ENCODE measurements at regions of chr7 and their contacts with region 1.

Region 1: GRCh38 chr7:40329601-40330153 is 194.9 kb downstream of the SUGCT start:
- DNase-seq: peak in 5 of 9 donors; percentile 11 to 30 (median 26)
- ATAC-seq: no peak
- H3K4me3 ChIP-seq: no peak overlapping the region
- H3K4me3 Mint-ChIP-seq: no peak overlapping the region
- H3K27ac ChIP-seq: no peak overlapping the region
- H3K27ac Mint-ChIP-seq: no peak overlapping the region
- H3K4me1 ChIP-seq: no peaks in the 10 kb centered on the region
- H3K4me1 Mint-ChIP-seq: no peaks in the 10 kb centered on the region
- H3K27me3 ChIP-seq: no peaks in the 10 kb centered on the region
- H3K27me3 Mint-ChIP-seq: no peaks in the 10 kb centered on the region

Region 2: DNA sequence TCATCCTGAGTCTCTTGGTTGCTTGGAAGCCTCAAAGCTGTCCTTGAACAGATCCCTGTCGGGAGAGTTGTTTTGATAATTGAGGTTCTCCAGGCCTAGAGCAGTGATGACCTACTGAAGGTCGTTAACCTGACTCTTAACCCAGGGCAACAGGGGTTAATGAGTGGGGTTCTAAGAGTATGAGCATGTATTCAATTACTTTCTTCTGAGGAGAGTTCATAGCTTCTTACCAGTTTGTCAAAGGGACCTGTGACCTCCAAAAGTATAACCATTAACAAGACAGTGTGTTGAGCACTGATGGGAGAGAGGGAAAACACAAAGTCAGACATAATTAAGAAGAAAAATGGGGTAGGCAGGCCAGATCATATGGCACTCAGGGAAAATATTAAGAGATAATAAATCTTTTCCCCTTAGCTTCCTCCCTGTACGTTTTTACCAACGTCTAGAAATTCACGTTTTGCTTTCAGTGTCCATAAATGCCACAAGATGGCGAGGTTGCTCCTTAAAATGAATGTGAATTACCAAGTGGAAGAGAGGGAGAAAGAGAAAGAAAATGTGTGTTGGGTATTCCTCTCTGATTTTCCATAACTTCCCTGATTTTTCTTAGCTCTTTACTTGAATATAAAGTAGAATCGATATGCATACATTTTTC is 97.3 kb before region 1 on chr7:
- CTCF ChIA-PET with region 1: no interaction called
- POLR2A ChIA-PET with region 1: no interaction called
- intact Hi-C with region 1: loop called in 1 of 2 experiments (anchors 2 kb)
- DNase-seq: peak in 3 of 9 donors; percentile 3 to 12 (median 11)
- ATAC-seq: peak; percentile 40
- H3K4me3 ChIP-seq: no peak overlapping the region
- H3K4me3 Mint-ChIP-seq: no peak overlapping the region
- H3K27ac ChIP-seq: no peak overlapping the region
- H3K27ac Mint-ChIP-seq: peak overlapping the region in 1 of 9 donors; percentile 7
- H3K4me1 ChIP-seq: peaks cover 0 to 4% of the 10 kb centered on the region in 2 donors
- H3K4me1 Mint-ChIP-seq: peaks cover 0 to 19% (median 6%) of the 10 kb centered on the region in 7 donors
- H3K27me3 ChIP-seq: no peaks in the 10 kb centered on the region
- H3K27me3 Mint-ChIP-seq: no peaks in the 10 kb centered on the region

Region 3: GRCh38 chr7:40489844-40490602 is 160.3 kb after region 1 on chr7:
- CTCF ChIA-PET with region 1: no interaction called
- POLR2A ChIA-PET with region 1: no interaction called
- intact Hi-C with region 1: no loop called
- DNase-seq: no peak
- ATAC-seq: no peak
- H3K4me3 ChIP-seq: no peak overlapping the region
- H3K4me3 Mint-ChIP-seq: no peak overlapping the region
- H3K27ac ChIP-seq: no peak overlapping the region
- H3K27ac Mint-ChIP-seq: no peak overlapping the region
- H3K4me1 ChIP-seq: no peaks in the 10 kb centered on the region
- H3K4me1 Mint-ChIP-seq: no peaks in the 10 kb centered on the region
- H3K27me3 ChIP-seq: no peaks in the 10 kb centered on the region
- H3K27me3 Mint-ChIP-seq: peaks cover 0 to 7% (median 0%) of the 10 kb centered on the region in 5 donors

Region 4: DNA sequence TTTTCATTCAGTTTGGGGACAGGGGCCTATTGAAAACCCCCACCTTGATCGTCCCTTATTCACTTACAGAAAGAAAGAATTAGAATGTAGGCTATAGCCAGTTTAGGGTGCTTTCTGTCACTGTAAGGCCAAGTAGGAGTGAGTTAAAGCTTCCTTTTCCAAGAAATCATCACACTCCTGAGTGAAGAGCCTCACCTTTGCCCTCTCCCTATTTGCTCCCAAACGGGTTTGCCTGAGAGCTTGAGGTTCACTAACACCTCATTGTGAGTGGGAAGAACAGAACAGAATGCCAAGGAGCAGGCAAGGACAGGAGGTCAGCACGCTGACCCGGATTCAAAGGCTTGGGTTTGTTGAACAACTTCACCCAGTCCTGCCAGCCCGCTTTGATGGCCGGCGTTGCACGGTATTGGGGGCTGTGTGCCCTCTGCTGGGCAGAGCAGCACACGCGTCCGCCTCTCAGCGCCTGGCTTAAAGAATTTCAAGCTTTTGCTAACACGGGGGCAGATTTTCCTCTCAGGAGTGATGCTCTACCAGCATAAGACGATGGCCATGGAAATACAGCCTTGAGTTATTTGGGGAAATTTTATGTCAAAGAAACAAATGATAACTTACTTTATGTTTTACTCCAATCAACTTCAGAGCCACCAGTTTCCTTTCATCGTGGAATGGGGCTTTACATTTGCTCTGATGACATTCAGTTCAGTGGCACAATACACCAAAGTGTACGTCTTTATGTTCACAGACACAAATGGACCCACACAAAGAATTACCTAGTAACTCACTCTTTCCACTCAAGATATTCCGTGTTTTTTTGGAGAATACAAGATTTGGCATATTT is 275.1 kb after region 1 on chr7:
- CTCF ChIA-PET with region 1: no interaction called
- POLR2A ChIA-PET with region 1: no interaction called
- intact Hi-C with region 1: loop called (anchors 1 kb)
- DNase-seq: peak in 1 of 9 donors; percentile 10
- ATAC-seq: peak; percentile 74
- H3K4me3 ChIP-seq: no peak overlapping the region
- H3K4me3 Mint-ChIP-seq: no peak overlapping the region
- H3K27ac ChIP-seq: no peak overlapping the region
- H3K27ac Mint-ChIP-seq: no peak overlapping the region
- H3K4me1 ChIP-seq: no peaks in the 10 kb centered on the region
- H3K4me1 Mint-ChIP-seq: peaks cover 0 to 4% (median 4%) of the 10 kb centered on the region in 7 donors
- H3K27me3 ChIP-seq: no peaks in the 10 kb centered on the region
- H3K27me3 Mint-ChIP-seq: peaks cover 0 to 25% (median 11%) of the 10 kb centered on the region in 5 donors

Region 5: GRCh38 chr7:41705109-41705901 is 1375.6 kb after region 1 on chr7:
- CTCF ChIA-PET with region 1: no interaction called
- POLR2A ChIA-PET with region 1: no interaction called
- intact Hi-C with region 1: loop called (anchors 2 to 5 kb)
- DNase-seq: peak; percentile 8 to 52 (median 27)
- ATAC-seq: peak; percentile 88
- H3K4me3 ChIP-seq: peak overlapping the region; percentile 58
- H3K4me3 Mint-ChIP-seq: peak overlapping the region; percentile 75 to 86 (median 81)
- H3K27ac ChIP-seq: no peak overlapping the region
- H3K27ac Mint-ChIP-seq: no peak overlapping the region
- H3K4me1 ChIP-seq: peaks cover 0 to 8% of the 10 kb centered on the region in 2 donors
- H3K4me1 Mint-ChIP-seq: peaks cover 0 to 20% (median 14%) of the 10 kb centered on the region in 7 donors
- H3K27me3 ChIP-seq: no peaks in the 10 kb centered on the region
- H3K27me3 Mint-ChIP-seq: peaks cover 46 to 69% (median 64%) of the 10 kb centered on the region in 5 donors

Measured in naive thymus-derived CD4-positive, alpha-beta T cell (primary cell).